ENCODE measurements at regions of chr15 and their contacts with region 1.

Region 1: GRCh38 chr15:67120839-67121643 is 55.6 kb downstream of the SMAD3 start:
- DNase-seq: peak; percentile 86
- ATAC-seq: peak; percentile 86
- H3K4me3 Mint-ChIP-seq: peak overlapping the region; percentile 74
- H3K27ac Mint-ChIP-seq: peak overlapping the region; percentile 94
- H3K4me1 Mint-ChIP-seq: peaks cover 97% of the 10 kb centered on the region
- H3K27me3 Mint-ChIP-seq: no peaks in the 10 kb centered on the region
- CTCF ChIP-seq: no peak

Region 2: DNA sequence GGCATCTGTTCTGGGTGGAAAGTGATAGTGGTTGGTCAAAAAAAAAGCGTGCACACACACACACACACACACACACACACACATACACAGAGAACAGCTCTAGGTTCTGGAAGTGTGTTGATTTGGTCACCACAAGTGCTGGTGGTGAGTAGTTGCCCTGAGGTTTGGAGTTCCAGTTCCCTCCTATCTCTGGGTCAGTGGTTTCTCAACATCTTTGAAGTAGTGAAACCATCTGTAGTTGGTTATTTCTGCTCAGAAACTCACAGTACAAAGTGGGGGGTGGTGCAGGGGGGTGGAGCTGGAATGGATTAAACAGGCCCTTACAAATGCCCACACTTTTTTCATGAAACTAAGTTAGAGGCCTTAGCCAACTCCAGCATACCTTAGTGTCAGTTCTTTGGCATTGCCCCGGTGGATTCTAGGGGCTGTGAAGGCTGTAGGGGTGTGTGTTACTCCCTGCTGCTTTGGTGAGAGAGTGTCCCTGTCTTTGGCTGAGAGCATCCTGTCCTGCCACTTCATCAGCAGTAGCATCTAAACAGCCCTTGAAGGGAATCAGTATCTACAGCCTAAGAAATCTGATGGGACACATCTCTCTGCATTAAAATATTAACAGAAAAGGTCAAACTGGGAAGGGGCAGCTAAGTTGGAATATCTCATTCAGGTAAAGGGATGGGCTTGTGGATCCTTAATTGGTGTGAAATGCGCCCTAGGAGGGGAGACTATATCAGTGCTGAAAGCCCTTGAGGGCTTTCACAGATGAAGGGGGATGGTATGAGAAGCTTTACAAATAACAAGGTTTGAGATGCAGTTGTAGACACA is 35.0 kb before region 1 on chr15:
- CTCF ChIA-PET with region 1: interaction called, 7 read pairs
- POLR2A ChIA-PET with region 1: interaction called, 1,703 read pairs
- intact Hi-C with region 1: loop called (anchors 1 kb)
- DNase-seq: no peak
- ATAC-seq: peak; percentile 51
- H3K4me3 Mint-ChIP-seq: peak overlapping the region; percentile 59
- H3K27ac Mint-ChIP-seq: peak overlapping the region; percentile 95
- H3K4me1 Mint-ChIP-seq: peaks cover 100% of the 10 kb centered on the region
- H3K27me3 Mint-ChIP-seq: no peaks in the 10 kb centered on the region
- CTCF ChIP-seq: no peak

Region 3: DNA sequence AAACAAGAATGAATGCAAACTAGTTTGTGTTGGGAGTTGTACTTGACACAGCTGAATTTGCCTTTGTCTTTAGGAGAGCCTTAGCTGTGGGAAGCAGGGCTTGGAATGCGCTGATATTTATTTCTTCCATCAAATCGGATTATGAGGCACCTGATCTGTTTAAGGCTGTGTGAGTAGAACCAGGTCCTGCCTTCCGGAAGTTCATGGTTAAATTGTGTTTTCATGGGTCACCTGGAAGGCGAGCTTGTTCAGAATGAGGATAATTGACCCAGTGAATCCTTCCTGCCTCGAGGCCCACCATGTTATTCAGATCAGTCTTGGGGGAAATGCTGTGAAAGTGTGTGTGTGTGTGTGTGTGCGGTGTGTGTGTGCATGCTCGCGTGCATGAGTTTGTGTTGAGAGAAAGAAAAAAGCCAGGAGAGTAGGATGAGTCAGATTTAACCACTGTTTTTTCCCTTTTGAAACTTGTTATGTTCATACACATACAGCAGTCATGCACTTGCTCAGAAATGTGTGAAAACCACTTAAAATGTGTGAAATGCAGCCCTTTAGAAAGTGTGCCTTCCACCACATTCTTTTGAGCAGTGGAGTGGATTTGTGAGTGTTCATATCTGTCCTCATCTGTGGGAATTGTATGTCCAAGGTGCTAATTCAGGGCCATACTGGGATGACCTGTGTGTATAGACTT is 19.0 kb before region 1 on chr15:
- CTCF ChIA-PET with region 1: interaction called, 11 read pairs
- POLR2A ChIA-PET with region 1: interaction called, 1,703 read pairs
- intact Hi-C with region 1: loop called (anchors 1 kb)
- DNase-seq: no peak
- ATAC-seq: peak; percentile 41
- H3K4me3 Mint-ChIP-seq: no peak overlapping the region
- H3K27ac Mint-ChIP-seq: no peak overlapping the region
- H3K4me1 Mint-ChIP-seq: peaks cover 33% of the 10 kb centered on the region
- H3K27me3 Mint-ChIP-seq: no peaks in the 10 kb centered on the region
- CTCF ChIP-seq: no peak

Region 4: DNA sequence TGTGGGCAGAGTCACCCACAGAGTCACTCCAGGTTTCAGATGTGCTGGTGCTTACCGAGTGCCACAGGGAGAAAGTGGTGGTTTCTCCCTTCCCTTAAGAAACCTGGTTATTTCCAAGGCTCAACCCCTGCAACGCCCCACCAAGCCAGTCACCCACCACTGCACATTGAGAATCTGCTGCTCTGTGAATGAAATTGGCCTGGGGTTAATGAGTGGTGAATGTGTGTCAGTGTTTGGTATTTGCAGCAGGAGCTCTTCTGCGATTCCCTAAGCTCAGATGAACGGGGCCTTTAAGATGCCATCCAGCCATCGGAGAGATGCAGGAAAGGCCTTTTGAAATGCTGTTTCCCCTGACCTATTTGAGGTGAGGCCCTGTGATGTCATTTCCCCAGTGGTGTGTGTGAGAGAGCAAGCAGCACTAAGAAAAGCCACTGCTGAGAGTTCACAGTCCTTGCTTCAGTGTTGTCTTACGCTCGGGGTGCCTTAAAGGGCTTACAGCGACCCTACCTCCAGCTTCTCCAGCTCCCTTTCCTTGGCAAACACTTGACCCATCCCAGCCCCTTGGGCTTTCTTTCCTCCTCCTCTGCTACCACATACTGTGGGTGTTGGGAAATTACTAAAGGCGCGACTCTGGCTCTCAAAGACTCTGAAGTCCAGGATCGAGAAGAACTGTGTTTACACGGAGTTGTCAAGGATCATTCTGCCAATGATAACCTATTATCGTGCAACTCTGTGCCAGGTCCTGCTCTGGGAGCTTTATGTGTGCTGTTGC is 13.2 kb after region 1 on chr15:
- CTCF ChIA-PET with region 1: interaction called, 3 read pairs
- POLR2A ChIA-PET with region 1: interaction called, 24 read pairs
- intact Hi-C with region 1: loop called (anchors 1 kb)
- DNase-seq: no peak
- ATAC-seq: peak; percentile 90
- H3K4me3 Mint-ChIP-seq: peak overlapping the region; percentile 78
- H3K27ac Mint-ChIP-seq: peak overlapping the region; percentile 94
- H3K4me1 Mint-ChIP-seq: peaks cover 94% of the 10 kb centered on the region
- H3K27me3 Mint-ChIP-seq: no peaks in the 10 kb centered on the region
- CTCF ChIP-seq: no peak

Region 5: GRCh38 chr15:67188551-67189218 is 67.6 kb after region 1 on chr15:
- CTCF ChIA-PET with region 1: no interaction called
- POLR2A ChIA-PET with region 1: no interaction called
- intact Hi-C with region 1: no loop called
- DNase-seq: no peak
- ATAC-seq: no peak
- H3K4me3 Mint-ChIP-seq: no peak overlapping the region
- H3K27ac Mint-ChIP-seq: no peak overlapping the region
- H3K4me1 Mint-ChIP-seq: peaks cover 6% of the 10 kb centered on the region
- H3K27me3 Mint-ChIP-seq: no peaks in the 10 kb centered on the region
- CTCF ChIP-seq: no peak

Region 6: DNA sequence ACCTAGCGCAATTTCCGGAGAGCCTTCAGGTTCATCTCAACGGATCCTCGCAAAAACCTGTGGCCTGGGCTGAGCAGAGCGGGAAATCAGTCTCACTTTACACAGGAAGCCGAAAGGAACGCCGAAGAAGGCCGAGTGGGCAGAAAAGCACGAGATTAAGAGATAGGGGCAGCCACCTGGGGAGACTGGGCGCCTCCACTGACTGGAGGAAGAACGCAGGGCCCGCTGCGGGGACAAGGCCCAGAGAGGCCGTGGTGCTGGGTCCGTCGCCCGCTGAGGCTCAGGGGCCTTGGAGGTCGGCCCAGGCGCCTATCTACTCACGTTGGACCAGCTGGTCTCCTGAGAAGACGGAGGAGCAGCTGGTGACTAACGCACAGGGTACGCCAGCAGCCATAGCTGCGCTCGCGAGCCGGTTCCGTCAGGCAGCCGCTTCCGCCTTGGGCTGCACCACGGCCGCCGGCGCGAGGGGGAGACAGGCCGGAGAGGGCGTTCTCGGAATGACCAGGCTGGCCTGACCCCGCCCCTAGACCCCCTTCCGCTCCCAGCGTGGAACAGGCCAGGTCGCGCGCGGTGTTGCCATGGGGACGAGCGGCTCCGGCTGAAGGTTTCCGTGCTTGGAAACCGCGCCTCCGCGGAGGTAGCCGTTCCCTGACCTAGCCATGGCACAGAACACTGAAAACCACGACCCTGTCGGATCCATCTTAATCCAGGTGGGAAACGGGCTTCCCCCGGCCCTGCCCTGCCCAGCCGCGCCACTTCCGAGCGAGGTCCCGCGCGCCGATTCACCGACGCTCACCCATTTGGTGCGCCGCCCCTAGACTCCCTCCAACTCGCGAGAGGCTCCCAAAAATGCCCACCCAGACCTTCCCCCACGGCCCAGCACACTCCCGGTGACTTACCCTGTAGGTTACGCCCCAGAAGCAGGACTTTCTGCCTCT is 133.5 kb after region 1 on chr15 and contains the starts of genes AAGAB and IQCH:
- CTCF ChIA-PET with region 1: no interaction called
- POLR2A ChIA-PET with region 1: interaction called, 3 read pairs
- intact Hi-C with region 1: loop called (anchors 1 kb)
- DNase-seq: peak; percentile 100
- ATAC-seq: peak; percentile 96
- H3K4me3 Mint-ChIP-seq: peak within 1 kb of the TSS; percentile 99
- H3K27ac Mint-ChIP-seq: peak within 1 kb of the TSS; percentile 95
- H3K4me1 Mint-ChIP-seq: peaks cover 26% of the 10 kb centered on the region
- H3K27me3 Mint-ChIP-seq: no peaks in the 10 kb centered on the region
- CTCF ChIP-seq: no peak
- total RNA-seq, gene AAGAB: 48.5 and 50.8 TPM in 2 replicates
- total RNA-seq, gene IQCH: 1.1 and 1.5 TPM in 2 replicates